Naive thymus-derived CD8-positive, alpha-beta T cell (primary cell): ENCODE measurements at regions of chr1 and their contacts with region 1.

Region 1: GRCh38 chr1:205750138-205751035 is at the start of gene NUCKS1:
- DNase-seq: peak; percentile 84 to 100 (median 98)
- ATAC-seq: peak; percentile 80 to 83
- H3K4me3 Mint-ChIP-seq: peak within 1 kb of the TSS; percentile 94 to 99 (median 97)
- H3K27ac Mint-ChIP-seq: peak within 1 kb of the TSS; percentile 97 to 99 (median 98)
- H3K4me1 Mint-ChIP-seq: peaks cover 18 to 40% (median 37%) of the 10 kb centered on the region in 4 donors
- H3K27me3 Mint-ChIP-seq: peaks cover 0 to 4% (median 0%) of the 10 kb centered on the region in 5 donors
- polyA plus RNA-seq, gene NUCKS1: 17.3 to 26.1 (median 18.6) TPM

Region 2: GRCh38 chr1:205739348-205740160 is 10.8 kb before region 1 on chr1:
- POLR2A ChIA-PET with region 1: interaction called, 13 read pairs
- DNase-seq: no peak
- ATAC-seq: no peak
- H3K4me3 Mint-ChIP-seq: no peak overlapping the region
- H3K27ac Mint-ChIP-seq: peak overlapping the region in 7 of 10 donors; percentile 17 to 72 (median 26)
- H3K4me1 Mint-ChIP-seq: peaks cover 14 to 61% (median 51%) of the 10 kb centered on the region in 4 donors
- H3K27me3 Mint-ChIP-seq: no peaks in the 10 kb centered on the region

Region 3: DNA sequence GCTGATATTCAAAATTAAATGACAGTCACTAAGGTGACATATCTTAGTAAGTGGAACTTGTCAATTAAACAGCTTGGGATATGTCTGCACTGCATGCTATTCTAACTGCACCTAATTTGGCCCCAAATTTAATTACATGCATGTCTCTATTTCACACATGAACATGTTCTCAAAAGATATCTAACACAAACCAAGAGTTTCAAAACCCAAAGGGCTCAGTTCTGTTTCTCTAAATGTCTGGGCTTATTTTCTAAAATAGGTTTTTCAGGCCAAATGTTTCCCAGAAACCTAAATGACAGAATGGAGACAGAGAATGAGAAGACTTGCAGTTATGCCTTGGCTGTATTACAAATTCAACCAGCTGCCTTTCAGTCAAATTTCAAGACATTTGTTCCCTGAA is 13.6 kb after region 1 on chr1:
- POLR2A ChIA-PET with region 1: interaction called, 10 read pairs
- DNase-seq: no peak
- ATAC-seq: no peak
- H3K4me3 Mint-ChIP-seq: no peak overlapping the region
- H3K27ac Mint-ChIP-seq: peak overlapping the region in 2 of 10 donors; percentile 35 to 37
- H3K4me1 Mint-ChIP-seq: peaks cover 3 to 11% (median 7%) of the 10 kb centered on the region in 4 donors
- H3K27me3 Mint-ChIP-seq: no peaks in the 10 kb centered on the region

Region 4: DNA sequence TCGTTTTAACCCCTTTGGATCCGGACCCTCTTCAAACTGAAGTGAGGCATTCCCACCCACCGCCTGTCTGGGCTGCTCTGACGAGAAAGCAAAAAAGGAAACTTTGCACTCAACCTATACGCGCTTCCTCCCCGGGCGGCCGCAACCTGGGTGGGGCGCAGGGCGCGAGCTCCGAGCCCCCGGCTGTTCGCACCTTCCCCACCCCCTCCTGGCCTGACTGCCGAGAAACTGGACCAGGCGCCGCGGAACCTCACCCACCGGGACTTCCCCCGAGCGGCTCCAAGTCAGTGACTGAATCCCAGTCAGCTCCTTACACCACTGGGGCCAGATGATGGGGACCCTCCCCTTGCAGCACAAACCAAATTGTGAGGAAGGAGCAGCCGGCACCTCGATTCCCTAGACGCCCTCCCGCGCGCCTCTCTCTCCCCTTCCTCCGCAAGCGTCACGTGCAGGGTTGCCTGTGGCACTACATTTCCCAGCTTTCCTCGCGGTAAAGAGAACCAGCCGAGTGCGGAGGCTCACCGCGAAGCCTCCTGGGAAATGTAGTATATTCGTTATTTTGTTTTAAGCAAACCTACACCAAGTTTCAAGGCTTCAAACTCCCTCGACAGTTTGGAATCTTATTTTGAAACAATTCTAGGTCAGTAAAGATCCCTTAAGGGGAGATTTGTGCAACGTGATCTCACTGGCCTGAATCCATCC is 24.8 kb after region 1 on chr1 and contains the start of gene RAB29:
- POLR2A ChIA-PET with region 1: interaction called, 84 read pairs
- DNase-seq: peak; percentile 71 to 93 (median 87)
- ATAC-seq: peak; percentile 87
- H3K4me3 Mint-ChIP-seq: peak within 1 kb of the TSS; percentile 89 to 99 (median 94)
- H3K27ac Mint-ChIP-seq: peak within 1 kb of the TSS; percentile 97 to 98 (median 98)
- H3K4me1 Mint-ChIP-seq: peaks cover 28 to 68% (median 61%) of the 10 kb centered on the region in 4 donors
- H3K27me3 Mint-ChIP-seq: no peaks in the 10 kb centered on the region
- polyA plus RNA-seq, gene RAB29: 71.3 to 113 (median 84.6) TPM

Region 5: DNA sequence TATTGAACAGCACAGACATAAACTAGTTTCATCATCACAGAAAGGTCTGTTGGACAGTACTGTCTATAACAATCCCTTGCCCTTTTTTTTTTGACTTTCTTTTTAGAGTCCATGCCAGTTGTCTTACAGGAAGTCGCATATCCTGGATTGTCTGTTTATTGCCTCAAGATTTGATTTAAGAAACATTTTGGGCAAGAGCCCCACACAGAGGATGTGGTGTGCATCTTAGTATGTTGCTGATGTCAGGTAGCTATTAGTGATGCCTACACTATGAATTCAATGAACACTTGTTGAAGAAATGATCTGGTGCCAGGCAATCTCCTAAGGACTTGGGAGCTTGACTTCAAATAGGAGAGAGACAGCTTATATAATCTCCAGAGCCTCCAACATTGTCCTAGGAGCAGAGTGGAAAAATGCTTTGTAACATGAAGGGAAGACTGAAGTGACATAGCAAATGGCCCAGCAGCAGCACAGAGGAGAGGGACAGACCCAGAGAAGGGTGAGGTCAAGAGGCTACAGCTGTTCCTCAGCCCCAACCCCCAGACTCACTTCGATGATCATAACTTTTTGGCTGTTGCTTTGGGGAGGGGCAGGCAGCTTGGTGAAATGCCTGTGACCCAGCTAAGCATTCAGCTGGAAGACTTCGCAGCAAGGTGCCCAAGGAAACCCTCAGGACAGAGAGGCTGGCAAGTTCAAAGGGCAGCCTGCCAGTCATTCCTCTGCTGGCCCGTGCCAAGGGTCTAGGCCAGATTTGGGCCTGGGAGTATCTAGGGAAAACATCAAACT is 32.4 kb after region 1 on chr1:
- POLR2A ChIA-PET with region 1: interaction called, 84 read pairs
- DNase-seq: peak in 4 of 10 donors; percentile 18 to 54 (median 34)
- ATAC-seq: peak; percentile 49 to 91
- H3K4me3 Mint-ChIP-seq: no peak overlapping the region
- H3K27ac Mint-ChIP-seq: peak overlapping the region in 8 of 10 donors; percentile 6 to 90 (median 66)
- H3K4me1 Mint-ChIP-seq: peaks cover 5 to 17% (median 12%) of the 10 kb centered on the region in 4 donors
- H3K27me3 Mint-ChIP-seq: no peaks in the 10 kb centered on the region